ENCODE measurements at regions of chr1 and their contacts with region 1.

Region 1: GRCh38 chr1:107262467-107263286 is 121.8 kb downstream of the NTNG1 start:
- DNase-seq: peak; percentile 98
- H3K4me3 ChIP-seq: peak overlapping the region; percentile 0
- H3K27ac ChIP-seq: peak overlapping the region; percentile 96
- H3K4me1 ChIP-seq: peaks cover 80% of the 10 kb centered on the region
- H3K27me3 ChIP-seq: no peaks in the 10 kb centered on the region
- CTCF ChIP-seq: no peak

Region 2: GRCh38 chr1:106746448-106747085 is 516.1 kb before region 1 on chr1:
- CTCF ChIA-PET with region 1: no interaction called
- POLR2A ChIA-PET with region 1: no interaction called
- intact Hi-C with region 1: loop called (anchors 5 kb)
- DNase-seq: peak; percentile 97
- H3K4me3 ChIP-seq: no peak overlapping the region
- H3K27ac ChIP-seq: peak overlapping the region; percentile 55
- H3K4me1 ChIP-seq: peaks cover 33% of the 10 kb centered on the region
- H3K27me3 ChIP-seq: no peaks in the 10 kb centered on the region
- CTCF ChIP-seq: no peak

Region 3: DNA sequence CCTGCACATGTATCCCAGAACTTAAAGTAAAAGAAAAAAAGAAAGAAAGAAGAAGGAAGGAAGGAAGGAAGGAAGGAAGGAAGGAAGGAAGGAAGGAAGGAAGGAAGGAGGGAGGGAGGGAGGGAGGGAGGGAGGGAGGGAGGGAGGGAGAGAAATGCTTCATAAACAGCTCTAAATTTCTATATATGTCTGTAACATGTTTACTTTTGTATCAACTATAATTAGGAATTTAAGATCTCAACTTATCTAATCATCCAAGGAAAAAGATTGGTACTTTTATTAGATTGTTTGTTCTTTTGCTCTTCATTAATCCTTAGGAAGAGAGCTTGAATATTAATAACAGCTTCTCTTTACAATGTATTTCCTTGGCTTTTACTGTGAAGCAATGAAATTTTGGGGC is 401.6 kb before region 1 on chr1:
- CTCF ChIA-PET with region 1: no interaction called
- POLR2A ChIA-PET with region 1: interaction called, 3 read pairs
- intact Hi-C with region 1: loop called (anchors 1 kb)
- DNase-seq: peak; percentile 55
- H3K4me3 ChIP-seq: no peak overlapping the region
- H3K27ac ChIP-seq: peak overlapping the region; percentile 88
- H3K4me1 ChIP-seq: peaks cover 10% of the 10 kb centered on the region
- H3K27me3 ChIP-seq: no peaks in the 10 kb centered on the region
- CTCF ChIP-seq: no peak

Region 4: GRCh38 chr1:107056426-107057196 is 206.1 kb before region 1 on chr1 and contains the start of gene PRMT6:
- CTCF ChIA-PET with region 1: no interaction called
- POLR2A ChIA-PET with region 1: interaction called, 3 read pairs
- intact Hi-C with region 1: loop called (anchors 5 kb)
- DNase-seq: peak; percentile 94
- H3K4me3 ChIP-seq: peak within 1 kb of the TSS; percentile 78
- H3K27ac ChIP-seq: peak within 1 kb of the TSS; percentile 89
- H3K4me1 ChIP-seq: peaks cover 13% of the 10 kb centered on the region
- H3K27me3 ChIP-seq: no peaks in the 10 kb centered on the region
- CTCF ChIP-seq: no peak
- total RNA-seq, gene PRMT6: 50.4 and 53.0 TPM in 2 replicates

Region 5: GRCh38 chr1:107198561-107198960 is 64.1 kb before region 1 on chr1:
- CTCF ChIA-PET with region 1: no interaction called
- POLR2A ChIA-PET with region 1: no interaction called
- intact Hi-C with region 1: loop called (anchors 1 kb)
- DNase-seq: peak; percentile 84
- H3K4me3 ChIP-seq: peak overlapping the region; percentile 3
- H3K27ac ChIP-seq: peak overlapping the region; percentile 78
- H3K4me1 ChIP-seq: peaks cover 66% of the 10 kb centered on the region
- H3K27me3 ChIP-seq: no peaks in the 10 kb centered on the region
- CTCF ChIP-seq: no peak

Region 6: DNA sequence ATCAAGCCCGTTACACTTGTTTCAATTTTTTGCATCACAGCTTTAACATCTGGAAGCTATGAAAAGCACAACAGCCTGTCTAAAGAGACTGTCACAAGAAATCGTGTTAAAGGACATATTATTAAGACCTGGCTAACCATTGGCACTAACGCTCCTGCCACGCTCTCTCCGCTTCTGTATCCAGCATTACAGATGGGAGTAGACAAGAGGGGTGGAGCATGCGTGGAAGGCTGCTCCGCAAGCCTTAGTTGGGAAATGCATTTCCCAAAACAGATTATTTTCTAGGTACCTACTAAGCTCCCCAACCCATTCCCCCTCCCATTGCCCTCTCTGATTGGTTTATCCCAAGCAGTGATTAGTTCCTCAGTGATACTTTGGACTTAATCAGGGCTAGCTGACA is 49.5 kb before region 1 on chr1:
- CTCF ChIA-PET with region 1: no interaction called
- POLR2A ChIA-PET with region 1: no interaction called
- intact Hi-C with region 1: no loop called
- DNase-seq: no peak
- H3K4me3 ChIP-seq: no peak overlapping the region
- H3K27ac ChIP-seq: peak overlapping the region; percentile 35
- H3K4me1 ChIP-seq: peaks cover 17% of the 10 kb centered on the region
- H3K27me3 ChIP-seq: no peaks in the 10 kb centered on the region
- CTCF ChIP-seq: no peak

Region 7: DNA sequence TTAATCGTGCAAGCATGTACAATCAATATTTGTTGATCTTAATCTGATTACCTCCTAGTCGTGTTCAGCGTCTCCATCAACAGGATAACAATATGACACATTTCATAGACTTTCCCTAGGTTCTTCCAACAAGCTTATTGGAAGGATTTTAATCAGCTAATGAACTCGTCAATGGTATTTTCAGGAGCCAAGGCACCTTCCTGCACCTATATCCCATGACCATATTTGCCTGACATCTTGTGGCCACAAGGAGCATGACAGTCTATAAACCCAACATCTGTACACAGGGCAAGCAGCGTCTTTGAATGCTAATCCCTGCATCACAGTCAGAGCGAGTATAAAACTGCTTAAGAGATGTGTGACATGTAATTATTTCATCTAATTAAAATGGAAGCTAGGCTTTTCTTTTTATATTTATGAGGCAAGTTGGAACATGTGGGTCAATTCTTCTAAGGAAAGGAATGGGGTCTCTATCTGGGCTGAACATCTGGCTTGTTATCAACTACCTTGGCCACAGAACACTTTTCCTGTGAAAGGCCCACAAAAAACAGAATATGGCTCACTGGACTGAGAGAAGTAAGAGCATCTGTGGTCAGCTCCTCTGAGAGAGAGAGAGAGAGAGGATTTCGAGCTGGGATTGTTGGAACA is 266.9 kb after region 1 on chr1:
- CTCF ChIA-PET with region 1: interaction called, 3 read pairs
- POLR2A ChIA-PET with region 1: no interaction called
- intact Hi-C with region 1: loop called (anchors 5 kb)
- DNase-seq: peak; percentile 87
- H3K4me3 ChIP-seq: no peak overlapping the region
- H3K27ac ChIP-seq: no peak overlapping the region
- H3K4me1 ChIP-seq: peaks cover 17% of the 10 kb centered on the region
- H3K27me3 ChIP-seq: no peaks in the 10 kb centered on the region
- CTCF ChIP-seq: peak; percentile 93

Measured in A673 (cell line).